Right ventricle myocardium inferior (tissue), 1 donor: ENCODE measurements at regions of chr9 and their contacts with region 1.

Region 1: GRCh38 chr9:122264360-122265148 is at the starts of genes MRRF and RBM18:
- DNase-seq: peak; percentile 97
- ATAC-seq: peak; percentile 90
- total RNA-seq, gene MRRF: 39.1 TPM
- total RNA-seq, gene RBM18: 38.5 TPM

Region 2: GRCh38 chr9:121852651-121853616 is 411.6 kb before region 1 on chr9:
- intact Hi-C with region 1: no loop called
- DNase-seq: no peak
- ATAC-seq: peak; percentile 73

Region 3: DNA sequence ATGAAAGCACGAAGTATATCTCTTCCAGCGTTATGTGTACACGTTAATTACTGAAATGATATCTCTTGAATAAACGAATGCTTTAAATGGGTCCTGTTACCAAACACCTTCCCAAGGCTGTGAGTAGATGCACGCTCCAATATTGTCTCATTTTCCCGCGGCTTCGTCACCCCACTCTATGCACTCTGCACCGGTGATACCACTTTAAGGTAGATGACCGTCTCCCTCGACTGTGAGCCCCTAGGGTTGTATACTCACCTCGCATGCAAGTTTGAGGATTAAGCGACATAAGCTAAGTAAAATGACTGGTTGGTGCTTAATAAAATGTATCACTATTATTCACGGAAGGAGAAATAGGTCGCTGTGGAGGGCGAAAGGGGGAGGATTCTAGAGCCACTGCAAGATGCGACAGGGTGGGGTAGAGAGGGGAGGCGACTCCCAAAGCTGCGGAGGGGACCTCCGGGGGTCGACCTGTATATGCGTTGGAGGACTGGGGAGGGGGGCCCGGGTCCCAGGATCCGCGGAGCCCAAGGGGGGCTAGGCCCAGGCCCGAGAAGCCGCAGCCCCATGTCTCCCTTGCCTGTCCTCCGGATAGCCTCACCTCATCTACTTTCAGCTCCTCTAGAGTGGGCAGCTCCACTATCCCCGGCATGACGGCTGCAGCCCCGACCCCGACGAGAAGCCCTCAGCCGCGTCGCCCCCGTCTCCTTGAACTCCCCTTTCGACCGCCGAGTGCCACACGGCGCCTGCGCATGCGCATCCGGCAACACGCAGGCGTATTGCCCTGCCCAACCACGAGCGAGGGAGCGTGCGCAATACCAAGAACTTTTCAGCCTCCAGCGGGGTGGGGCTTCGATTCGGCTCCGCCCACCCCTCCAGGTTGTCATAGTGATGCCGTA is 105.3 kb before region 1 on chr9 and contains the starts of genes MORN5 and NDUFA8:
- intact Hi-C with region 1: loop called (anchors 5 kb)
- DNase-seq: peak; percentile 98
- ATAC-seq: peak; percentile 98
- total RNA-seq, gene MORN5: not detected
- total RNA-seq, gene NDUFA8: 297 TPM

Region 4: GRCh38 chr9:122213589-122214413 is 50.8 kb before region 1 on chr9:
- intact Hi-C with region 1: no loop called
- DNase-seq: no peak
- ATAC-seq: no peak

Region 5: DNA sequence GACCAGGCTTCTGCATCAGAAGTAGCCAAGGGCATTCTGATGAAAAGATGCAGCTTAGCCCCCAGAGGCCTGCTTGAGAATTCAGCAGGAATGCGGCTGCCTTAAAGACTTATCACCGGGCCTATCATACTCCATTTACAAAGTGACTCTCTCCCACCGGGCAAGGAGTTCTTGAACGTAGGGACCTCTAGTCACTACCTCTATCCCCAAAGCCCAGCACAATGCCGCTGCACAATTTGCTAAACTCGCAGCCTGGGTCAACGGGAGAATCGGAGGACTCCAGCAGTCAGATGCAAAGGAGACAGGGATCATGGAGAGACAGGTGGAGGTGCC is 563.2 kb after region 1 on chr9:
- intact Hi-C with region 1: loop called (anchors 10 kb)
- DNase-seq: no peak
- ATAC-seq: peak; percentile 11